ENCODE measurements at regions of chr12 and their contacts with region 1.

Region 1: GRCh38 chr12:68440068-68440581 is 108.0 kb upstream of the MDM1 start:
- DNase-seq: no peak
- ATAC-seq: no peak
- H3K4me3 ChIP-seq: no peak overlapping the region
- H3K4me3 Mint-ChIP-seq: no peak overlapping the region
- H3K27ac ChIP-seq: no peak overlapping the region
- H3K27ac Mint-ChIP-seq: no peak overlapping the region
- H3K4me1 ChIP-seq: no peaks in the 10 kb centered on the region
- H3K4me1 Mint-ChIP-seq: peaks cover 30% of the 10 kb centered on the region
- H3K27me3 ChIP-seq: no peaks in the 10 kb centered on the region
- H3K27me3 Mint-ChIP-seq: no peaks in the 10 kb centered on the region
- CTCF ChIP-seq: no peak

Region 2: GRCh38 chr12:68469113-68469512 is 29.0 kb after region 1 on chr12:
- CTCF ChIA-PET with region 1: no interaction called
- POLR2A ChIA-PET with region 1: no interaction called
- intact Hi-C with region 1: no loop called
- DNase-seq: no peak
- ATAC-seq: no peak
- H3K4me3 ChIP-seq: no peak overlapping the region
- H3K4me3 Mint-ChIP-seq: no peak overlapping the region
- H3K27ac ChIP-seq: no peak overlapping the region
- H3K27ac Mint-ChIP-seq: no peak overlapping the region
- H3K4me1 ChIP-seq: no peaks in the 10 kb centered on the region
- H3K4me1 Mint-ChIP-seq: peaks cover 3% of the 10 kb centered on the region
- H3K27me3 ChIP-seq: no peaks in the 10 kb centered on the region
- H3K27me3 Mint-ChIP-seq: peaks cover 5% of the 10 kb centered on the region
- CTCF ChIP-seq: no peak

Region 3: GRCh38 chr12:68482660-68483059 is 42.5 kb after region 1 on chr12:
- CTCF ChIA-PET with region 1: interaction called, 3 read pairs
- POLR2A ChIA-PET with region 1: no interaction called
- intact Hi-C with region 1: loop called (anchors 5 kb)
- DNase-seq: peak; percentile 22
- ATAC-seq: peak; percentile 24
- H3K4me3 ChIP-seq: no peak overlapping the region
- H3K4me3 Mint-ChIP-seq: peak overlapping the region; percentile 43
- H3K27ac ChIP-seq: peak overlapping the region; percentile 39 to 52
- H3K27ac Mint-ChIP-seq: peak overlapping the region; percentile 8
- H3K4me1 ChIP-seq: peaks cover 29 to 30% of the 10 kb centered on the region in 2 donors
- H3K4me1 Mint-ChIP-seq: peaks cover 32% of the 10 kb centered on the region
- H3K27me3 ChIP-seq: no peaks in the 10 kb centered on the region
- H3K27me3 Mint-ChIP-seq: no peaks in the 10 kb centered on the region
- CTCF ChIP-seq: no peak

Measured in B cell (primary cell).